Gastrocnemius medialis (tissue), 4 donors: ENCODE measurements at regions of chr1 and their contacts with region 1.

Region 1: GRCh38 chr1:169193191-169193850 is 86.8 kb downstream of the ATP1B1 start:
- DNase-seq: peak; percentile 29 to 55
- ATAC-seq: peak; percentile 93 to 95
- H3K4me3 ChIP-seq: no peak overlapping the region
- H3K27ac ChIP-seq: peak overlapping the region; percentile 66 to 77 (median 70)
- H3K4me1 ChIP-seq: peaks cover 12 to 14% of the 10 kb centered on the region in 2 donors
- H3K27me3 ChIP-seq: no peaks in the 10 kb centered on the region
- CTCF ChIP-seq: no peak
- POLR2A ChIP-seq: no peak

Region 2: GRCh38 chr1:168626326-168626725 is 567.0 kb before region 1 on chr1:
- in situ Hi-C with region 1: no loop called
- intact Hi-C with region 1: no loop called
- DNase-seq: no peak
- ATAC-seq: no peak
- H3K4me3 ChIP-seq: no peak overlapping the region
- H3K27ac ChIP-seq: peak overlapping the region in 1 of 4 donors; percentile 100
- H3K4me1 ChIP-seq: peaks cover 34 to 51% of the 10 kb centered on the region in 2 donors
- H3K27me3 ChIP-seq: no peaks in the 10 kb centered on the region
- CTCF ChIP-seq: no peak
- POLR2A ChIP-seq: no peak

Region 3: GRCh38 chr1:169041366-169041765 is 152.0 kb before region 1 on chr1:
- in situ Hi-C with region 1: no loop called
- intact Hi-C with region 1: no loop called
- DNase-seq: no peak
- ATAC-seq: no peak
- H3K4me3 ChIP-seq: no peak overlapping the region
- H3K27ac ChIP-seq: no peak overlapping the region
- H3K4me1 ChIP-seq: peaks cover 0 to 14% of the 10 kb centered on the region in 2 donors
- H3K27me3 ChIP-seq: no peaks in the 10 kb centered on the region
- CTCF ChIP-seq: no peak
- POLR2A ChIP-seq: no peak

Region 4: GRCh38 chr1:169161496-169162194 is 31.7 kb before region 1 on chr1:
- in situ Hi-C with region 1: no loop called
- intact Hi-C with region 1: no loop called
- DNase-seq: no peak
- ATAC-seq: no peak
- H3K4me3 ChIP-seq: no peak overlapping the region
- H3K27ac ChIP-seq: no peak overlapping the region
- H3K4me1 ChIP-seq: peaks cover 0 to 4% of the 10 kb centered on the region in 2 donors
- H3K27me3 ChIP-seq: no peaks in the 10 kb centered on the region
- CTCF ChIP-seq: no peak
- POLR2A ChIP-seq: no peak

Region 5: DNA sequence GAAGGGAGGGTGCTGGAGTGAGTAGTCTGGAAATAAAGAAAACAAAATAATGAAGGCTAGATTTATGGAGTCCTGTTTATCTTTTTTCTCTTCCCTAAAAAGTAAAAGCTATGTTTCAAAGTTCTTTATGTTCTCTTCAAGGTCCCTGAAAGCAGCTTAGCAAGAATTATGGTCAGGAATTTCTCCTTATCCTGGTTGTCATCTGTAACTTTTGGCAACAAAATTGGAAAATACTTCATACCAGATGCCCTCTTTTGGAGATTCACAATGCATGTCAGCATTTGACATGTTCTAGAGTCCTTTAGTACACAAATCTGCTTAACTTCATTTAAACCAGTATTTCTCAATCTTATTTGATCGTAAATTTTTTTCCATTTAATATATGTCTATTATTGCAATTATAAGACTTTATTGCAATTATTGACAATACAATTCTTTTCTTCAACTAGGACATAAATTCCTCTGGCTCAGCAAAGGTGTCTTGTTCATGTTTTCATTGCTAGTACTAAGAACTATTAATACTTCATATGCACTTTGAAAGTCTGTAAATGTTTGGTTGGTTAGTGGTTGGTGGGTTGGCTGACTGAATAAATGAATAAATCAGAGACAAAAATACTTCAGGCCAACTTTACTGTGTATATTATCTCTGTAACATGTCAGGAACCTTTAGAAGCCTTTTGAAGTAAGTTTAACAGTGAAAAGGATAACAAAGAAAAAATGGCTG is 14.6 kb after region 1 on chr1:
- in situ Hi-C with region 1: no loop called
- intact Hi-C with region 1: no loop called
- DNase-seq: no peak
- ATAC-seq: no peak
- H3K4me3 ChIP-seq: no peak overlapping the region
- H3K27ac ChIP-seq: no peak overlapping the region
- H3K4me1 ChIP-seq: peaks cover 0 to 3% of the 10 kb centered on the region in 2 donors
- H3K27me3 ChIP-seq: no peaks in the 10 kb centered on the region
- CTCF ChIP-seq: no peak
- POLR2A ChIP-seq: no peak

Region 6: DNA sequence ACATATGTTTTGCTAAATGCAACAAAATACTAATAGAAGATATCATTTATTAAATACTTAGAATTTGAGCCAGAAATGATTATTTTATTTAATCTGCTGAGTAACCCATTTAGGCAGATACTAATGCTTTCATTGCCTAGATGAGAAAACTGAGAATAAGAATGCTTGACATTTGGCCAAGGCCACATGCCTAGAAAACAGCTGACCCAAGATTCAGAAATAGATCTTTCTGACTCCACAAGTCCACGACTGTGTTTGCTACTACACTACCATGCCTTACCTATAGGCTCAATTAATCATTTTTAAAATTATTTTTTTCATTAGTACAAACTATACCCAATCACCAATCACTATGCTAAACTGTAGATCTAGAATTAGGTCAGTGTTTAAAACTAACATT is 42.8 kb after region 1 on chr1:
- in situ Hi-C with region 1: no loop called
- intact Hi-C with region 1: loop called (anchors 5 kb)
- DNase-seq: peak in 1 of 2 donors; percentile 13
- ATAC-seq: peak; percentile 85 to 89
- H3K4me3 ChIP-seq: no peak overlapping the region
- H3K27ac ChIP-seq: peak overlapping the region in 1 of 4 donors; percentile 40
- H3K4me1 ChIP-seq: peaks cover 28 to 47% of the 10 kb centered on the region in 2 donors
- H3K27me3 ChIP-seq: no peaks in the 10 kb centered on the region
- CTCF ChIP-seq: peak in 1 of 5 experiments; percentile 15
- POLR2A ChIP-seq: no peak